ENCODE measurements at regions of chr1 and their contacts with region 1.

Region 1: DNA sequence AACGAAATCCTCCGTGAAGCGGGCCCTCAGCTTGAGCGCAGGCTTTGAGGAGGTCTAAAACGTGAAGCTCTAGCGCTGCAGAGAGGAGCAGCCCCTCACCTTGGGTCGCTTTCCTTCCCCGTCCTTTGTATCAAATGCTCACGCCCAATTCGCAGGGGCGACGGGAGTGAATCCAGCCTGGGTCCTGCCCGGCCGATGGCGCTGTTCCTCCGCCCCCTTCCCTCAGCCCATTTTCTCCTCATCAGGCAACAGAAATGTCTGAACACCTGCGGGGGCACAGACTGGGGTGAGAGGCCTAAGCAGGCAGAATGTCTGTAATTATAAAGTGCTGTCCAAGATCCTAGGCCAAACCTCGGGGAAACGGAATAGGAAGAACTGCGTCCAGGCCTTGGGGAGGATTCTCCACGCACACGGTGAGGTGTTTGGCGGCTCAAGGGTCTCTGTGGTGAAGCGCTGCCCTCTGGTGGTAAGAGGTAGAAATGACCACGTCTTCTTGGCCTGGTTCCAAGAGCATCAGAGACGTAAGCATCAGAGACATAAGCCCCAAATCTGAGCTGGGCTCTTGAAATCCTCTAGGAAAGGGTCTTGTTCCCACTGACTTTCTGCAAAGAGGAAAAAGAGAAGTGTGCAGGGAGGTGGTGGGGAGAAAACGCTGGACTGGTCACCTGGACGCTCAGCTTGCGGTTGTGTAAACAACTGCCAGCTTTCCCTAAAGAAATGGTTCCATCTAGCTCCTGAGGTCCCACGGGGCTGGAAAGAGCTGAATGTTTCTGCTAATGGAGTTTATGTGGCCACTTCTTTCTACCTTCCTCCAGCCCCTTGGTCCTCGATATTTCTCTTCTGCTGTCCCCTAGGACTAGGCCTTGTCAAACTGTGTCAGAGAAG is 92.1 kb upstream of the CD53 start:
- DNase-seq: peak; percentile 59 to 64
- H3K4me3 ChIP-seq: no peak overlapping the region
- H3K27ac ChIP-seq: no peak overlapping the region
- H3K4me1 ChIP-seq: no peaks in the 10 kb centered on the region
- H3K27me3 ChIP-seq: peaks cover 4% of the 10 kb centered on the region; the same call in 1 of the 2 replicates
- CTCF ChIP-seq: peak; percentile 94

Region 2: DNA sequence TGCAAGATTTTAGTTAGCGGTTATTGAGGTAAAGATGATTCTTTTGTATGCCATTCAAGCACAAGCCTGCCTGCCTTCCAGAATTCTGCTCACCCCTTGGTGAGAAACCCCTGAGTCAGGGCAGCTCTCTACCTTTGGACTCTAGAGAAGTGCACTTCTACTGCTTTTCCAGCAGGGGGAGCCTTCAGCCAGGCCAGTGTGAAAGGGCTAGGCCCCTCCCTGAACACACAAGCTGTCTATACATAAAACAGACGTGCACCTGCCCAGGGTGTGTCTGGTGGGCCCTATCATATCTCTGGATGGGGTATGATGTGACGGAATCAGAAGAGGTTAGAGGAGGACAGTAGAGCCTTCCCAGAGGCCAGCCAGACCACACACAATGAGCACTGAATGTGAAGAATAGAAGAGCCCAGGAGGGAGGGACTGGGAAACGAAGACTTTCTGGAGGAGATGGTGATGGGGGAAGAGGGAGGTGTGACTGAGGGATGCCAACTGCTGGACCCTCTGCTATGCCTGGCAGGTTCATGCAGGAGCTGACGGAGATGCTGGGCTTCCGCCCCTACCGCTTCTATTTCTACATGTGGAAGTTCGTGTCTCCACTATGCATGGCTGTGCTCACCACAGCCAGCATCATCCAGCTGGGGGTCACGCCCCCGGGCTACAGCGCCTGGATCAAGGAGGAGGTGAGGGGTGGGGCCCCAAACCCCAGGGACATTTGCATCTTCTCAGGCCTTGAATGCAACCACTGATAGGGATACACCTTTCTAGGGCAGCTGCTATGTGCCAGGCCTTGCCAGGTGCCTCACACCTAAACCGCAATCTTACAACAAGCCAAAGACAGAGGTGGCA is 583.7 kb before region 1 on chr1:
- CTCF ChIA-PET with region 1: no interaction called
- POLR2A ChIA-PET with region 1: no interaction called
- intact Hi-C with region 1: loop called (anchors 5 kb)
- DNase-seq: peak; percentile 45 to 68
- H3K4me3 ChIP-seq: no peak overlapping the region
- H3K27ac ChIP-seq: no peak overlapping the region
- H3K4me1 ChIP-seq: peaks cover 12% of the 10 kb centered on the region
- H3K27me3 ChIP-seq: no peaks in the 10 kb centered on the region
- CTCF ChIP-seq: peak; percentile 100

Region 3: GRCh38 chr1:110524311-110525251 is 256.3 kb before region 1 on chr1:
- CTCF ChIA-PET with region 1: no interaction called
- POLR2A ChIA-PET with region 1: no interaction called
- intact Hi-C with region 1: loop called (anchors 1 kb)
- DNase-seq: peak in 1 of 2 experiments; percentile 27
- H3K4me3 ChIP-seq: no peak overlapping the region
- H3K27ac ChIP-seq: no peak overlapping the region
- H3K4me1 ChIP-seq: 0 out of 2 replicates have a peak, but pooled peaks cover 8% of the 10 kb centered on the region
- H3K27me3 ChIP-seq: peaks cover 96% of the 10 kb centered on the region
- CTCF ChIP-seq: peak; percentile 91

Region 4: DNA sequence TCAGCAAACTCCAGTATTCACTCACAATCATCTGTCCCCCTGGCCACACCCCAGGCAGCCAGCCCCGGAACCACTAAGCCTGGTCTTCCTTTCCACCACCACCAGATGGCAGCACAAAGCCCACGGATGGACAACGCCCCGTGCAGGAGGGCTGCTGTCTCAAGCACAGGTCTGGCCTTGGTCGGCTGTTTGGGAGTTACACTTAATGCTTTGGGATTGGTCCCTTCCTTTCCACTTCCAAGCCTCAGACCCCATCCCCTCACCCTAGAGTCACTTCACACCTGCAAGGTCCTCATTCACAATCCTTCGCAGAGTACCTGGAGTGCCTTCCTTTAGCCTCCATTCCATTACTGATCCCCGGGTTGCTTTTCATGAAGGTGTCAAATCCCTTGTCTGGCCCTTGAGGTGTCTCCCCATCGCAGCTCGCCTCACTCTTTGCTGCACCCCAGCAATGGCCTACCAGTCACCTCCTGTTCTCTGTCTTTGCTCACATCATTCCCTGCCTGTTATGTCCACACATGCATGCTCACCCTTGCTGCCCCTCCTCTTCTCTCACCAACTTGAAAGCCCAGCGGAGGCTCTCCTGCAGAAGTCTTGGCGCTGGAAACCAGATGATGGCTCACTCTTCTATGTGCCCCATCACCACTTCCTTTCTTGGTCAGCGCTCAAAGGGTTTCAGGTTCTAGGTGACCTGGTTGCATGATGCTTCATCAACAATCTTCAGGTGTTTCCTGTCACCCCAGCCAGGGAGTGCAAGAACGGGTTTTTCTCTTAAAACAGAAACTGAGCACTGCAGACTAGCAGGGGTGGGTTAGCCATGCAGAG is 149.8 kb before region 1 on chr1:
- CTCF ChIA-PET with region 1: interaction called, 3 read pairs
- POLR2A ChIA-PET with region 1: no interaction called
- intact Hi-C with region 1: loop called (anchors 5 kb)
- DNase-seq: peak; percentile 58 to 63
- H3K4me3 ChIP-seq: no peak overlapping the region
- H3K27ac ChIP-seq: no peak overlapping the region
- H3K4me1 ChIP-seq: no peaks in the 10 kb centered on the region
- H3K27me3 ChIP-seq: no peaks in the 10 kb centered on the region
- CTCF ChIP-seq: peak; percentile 89

Region 5: GRCh38 chr1:110990536-110990935 is 209.7 kb after region 1 on chr1:
- CTCF ChIA-PET with region 1: no interaction called
- POLR2A ChIA-PET with region 1: no interaction called
- intact Hi-C with region 1: loop called (anchors 1 kb)
- DNase-seq: no peak
- H3K4me3 ChIP-seq: no peak overlapping the region
- H3K27ac ChIP-seq: no peak overlapping the region
- H3K4me1 ChIP-seq: no peaks in the 10 kb centered on the region
- H3K27me3 ChIP-seq: peaks cover 19% of the 10 kb centered on the region
- CTCF ChIP-seq: no peak